ENCODE measurements at regions of chr4 and their contacts with region 1.

Region 1: GRCh38 chr4:1809754-1810511 is 16.8 kb downstream of the FGFR3 start:
- DNase-seq: peak; percentile 88
- ATAC-seq: peak; percentile 93
- H3K4me3 Mint-ChIP-seq: no peak overlapping the region
- H3K27ac Mint-ChIP-seq: no peak overlapping the region
- H3K4me1 Mint-ChIP-seq: no peaks in the 10 kb centered on the region
- H3K27me3 Mint-ChIP-seq: no peaks in the 10 kb centered on the region

Region 2: GRCh38 chr4:1746265-1746691 is 63.7 kb before region 1 on chr4:
- CTCF ChIA-PET with region 1: interaction called, 104 read pairs
- POLR2A ChIA-PET with region 1: no interaction called
- intact Hi-C with region 1: loop called (anchors 1 kb)
- DNase-seq: peak; percentile 88
- ATAC-seq: peak; percentile 72
- H3K4me3 Mint-ChIP-seq: no peak overlapping the region
- H3K27ac Mint-ChIP-seq: no peak overlapping the region
- H3K4me1 Mint-ChIP-seq: no peaks in the 10 kb centered on the region
- H3K27me3 Mint-ChIP-seq: no peaks in the 10 kb centered on the region

Measured in activated CD4-positive, alpha-beta T cell treated with anti-CD3 and anti-CD28 coated beads for 36 hours (primary cell).